ENCODE measurements at regions of chr1 and their contacts with region 1.

Region 1: DNA sequence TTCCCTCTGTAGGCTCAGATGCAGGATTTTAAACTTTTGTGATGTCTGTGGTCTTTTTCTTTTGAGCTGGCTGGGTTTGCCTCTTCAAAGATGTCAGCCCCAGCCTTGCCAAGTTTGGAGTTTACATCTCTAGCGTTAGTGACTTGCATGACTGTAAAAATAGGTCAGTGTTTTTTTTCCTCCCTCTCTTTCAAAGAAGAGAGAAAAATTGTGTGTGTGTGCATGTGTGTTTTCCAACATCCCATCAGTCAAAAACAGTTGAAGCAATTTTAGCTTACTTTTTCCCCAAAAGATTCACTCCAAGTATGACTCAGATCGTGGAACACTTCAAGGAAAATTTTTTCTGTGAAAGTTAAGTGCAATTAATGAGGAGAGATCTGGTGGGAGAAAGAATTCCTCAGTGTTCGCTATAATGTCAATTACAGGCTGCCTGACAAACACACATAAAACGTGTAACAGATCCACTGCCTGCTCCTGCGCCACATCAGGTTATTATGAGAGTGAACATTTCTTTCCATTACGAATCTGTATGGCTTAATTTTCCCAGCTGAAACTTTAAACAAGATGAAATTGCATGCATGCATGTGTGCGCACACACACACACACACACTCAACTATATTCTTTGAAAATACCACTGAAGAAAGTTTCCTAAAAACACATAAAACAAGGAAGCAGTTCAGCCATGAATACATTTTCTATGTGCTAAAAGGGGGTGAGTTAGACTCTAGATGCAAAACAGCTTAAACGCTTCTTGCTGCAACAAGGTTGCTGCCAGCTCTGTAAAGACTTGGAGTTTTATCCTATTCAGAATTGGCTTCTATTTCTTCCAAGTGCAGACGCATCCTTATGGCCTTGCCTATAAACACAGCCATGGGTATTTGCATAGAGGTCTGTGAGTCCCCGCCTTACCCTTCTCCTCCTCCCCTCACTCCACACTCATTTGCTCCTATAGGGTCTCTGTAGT is 55.5 kb downstream of the TLR5 start:
- DNase-seq: no peak
- H3K4me3 ChIP-seq: no peak overlapping the region
- H3K27ac ChIP-seq: no peak overlapping the region
- H3K27me3 ChIP-seq: peaks cover 35% of the 10 kb centered on the region
- CTCF ChIP-seq: no peak

Region 2: DNA sequence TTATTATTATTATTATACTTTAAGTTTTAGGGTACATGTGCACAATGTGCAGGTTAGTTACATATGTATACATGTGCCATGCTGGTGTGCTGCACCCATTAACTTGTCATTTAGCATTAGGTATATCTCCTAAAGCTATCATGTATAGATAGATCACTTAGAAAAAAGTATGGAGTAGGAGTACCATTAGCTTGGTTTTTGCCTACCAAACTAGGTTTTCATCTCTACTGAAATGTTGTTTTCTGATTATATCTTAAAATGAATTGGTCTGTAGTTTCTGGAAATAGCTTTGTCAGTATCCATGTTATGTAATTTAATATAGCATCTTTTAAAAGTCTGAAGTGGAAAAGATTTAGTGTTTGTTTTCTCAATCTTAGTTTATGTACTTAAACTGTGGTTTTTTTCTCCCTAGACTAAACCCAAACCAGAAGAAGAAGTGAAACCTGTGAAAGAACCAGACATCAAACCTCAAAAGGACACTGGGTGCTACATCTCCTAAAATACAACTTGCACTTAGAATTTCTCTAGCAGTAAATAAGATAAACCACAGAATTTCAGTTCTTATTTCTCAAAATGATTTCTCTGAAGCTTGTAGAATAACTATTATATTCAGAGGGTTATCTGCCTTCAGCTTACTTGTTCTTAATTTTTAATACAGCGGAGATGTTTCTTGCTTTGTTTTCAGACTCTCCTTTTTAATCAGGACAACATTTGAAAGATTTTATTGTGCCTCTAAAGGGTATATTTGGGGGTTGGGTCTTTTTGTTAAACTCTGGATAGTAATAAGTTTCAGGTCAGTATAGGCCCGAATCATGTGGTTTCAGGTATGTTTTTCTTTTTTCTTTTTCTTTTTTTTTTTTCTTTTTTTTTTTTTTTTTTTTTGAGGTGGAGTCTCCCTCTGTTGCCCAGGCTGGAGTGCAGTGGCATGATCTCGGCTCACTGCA is 355.1 kb before region 1 on chr1:
- CTCF ChIA-PET with region 1: interaction called, 27 read pairs
- POLR2A ChIA-PET with region 1: no interaction called
- DNase-seq: no peak
- H3K4me3 ChIP-seq: no peak overlapping the region
- H3K27ac ChIP-seq: no peak overlapping the region
- H3K27me3 ChIP-seq: no peaks in the 10 kb centered on the region
- CTCF ChIP-seq: no peak

Region 3: DNA sequence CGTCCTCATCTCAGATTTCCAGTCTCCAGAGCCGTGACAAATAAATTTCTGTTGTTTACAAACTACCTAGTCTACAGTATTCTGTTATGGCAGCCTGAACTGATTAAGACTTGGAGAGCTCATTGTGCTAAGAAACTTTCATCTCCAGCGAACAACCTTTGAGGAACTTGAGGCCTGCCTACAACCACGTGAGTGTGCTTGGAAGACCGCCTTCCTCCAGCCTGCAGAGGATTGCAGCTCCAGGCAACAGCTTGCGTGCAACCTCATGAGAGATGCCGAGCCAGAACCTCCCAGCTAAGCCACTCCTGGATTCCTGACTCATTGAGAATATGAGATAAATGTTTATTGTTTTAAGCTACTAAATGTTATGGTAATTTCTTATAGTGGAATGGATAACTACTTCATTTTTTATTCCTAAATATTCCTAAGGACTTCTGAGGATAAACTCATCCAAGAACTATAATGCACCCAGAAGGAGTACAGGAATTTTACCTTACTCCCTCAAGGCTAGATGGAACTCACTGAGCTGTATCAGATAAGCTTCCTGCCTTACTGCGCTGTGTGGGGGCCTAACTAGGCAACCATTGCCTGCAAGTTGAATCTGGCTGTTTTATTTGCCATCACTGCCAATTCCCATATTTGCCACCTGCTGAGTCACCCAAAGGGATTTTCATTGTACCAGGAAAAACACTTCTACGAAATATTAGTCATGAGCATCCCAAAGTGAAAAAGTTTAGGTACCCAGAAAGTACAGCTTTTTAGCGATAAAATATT is 333.0 kb before region 1 on chr1:
- CTCF ChIA-PET with region 1: interaction called, 13 read pairs
- POLR2A ChIA-PET with region 1: no interaction called
- DNase-seq: peak; percentile 92
- H3K4me3 ChIP-seq: no peak overlapping the region
- H3K27ac ChIP-seq: peak overlapping the region; percentile 49
- H3K27me3 ChIP-seq: no peaks in the 10 kb centered on the region
- CTCF ChIP-seq: no peak

Region 4: GRCh38 chr1:222798116-222798515 is 289.5 kb before region 1 on chr1:
- CTCF ChIA-PET with region 1: interaction called, 118 read pairs
- POLR2A ChIA-PET with region 1: no interaction called
- DNase-seq: no peak
- H3K4me3 ChIP-seq: no peak overlapping the region
- H3K27ac ChIP-seq: no peak overlapping the region
- H3K27me3 ChIP-seq: no peaks in the 10 kb centered on the region
- CTCF ChIP-seq: no peak

Region 5: GRCh38 chr1:223074445-223075300 is 12.9 kb before region 1 on chr1:
- CTCF ChIA-PET with region 1: interaction called, 15 read pairs
- POLR2A ChIA-PET with region 1: no interaction called
- DNase-seq: no peak
- H3K4me3 ChIP-seq: no peak overlapping the region
- H3K27ac ChIP-seq: no peak overlapping the region
- H3K27me3 ChIP-seq: peaks cover 34% of the 10 kb centered on the region
- CTCF ChIP-seq: no peak

Region 6: DNA sequence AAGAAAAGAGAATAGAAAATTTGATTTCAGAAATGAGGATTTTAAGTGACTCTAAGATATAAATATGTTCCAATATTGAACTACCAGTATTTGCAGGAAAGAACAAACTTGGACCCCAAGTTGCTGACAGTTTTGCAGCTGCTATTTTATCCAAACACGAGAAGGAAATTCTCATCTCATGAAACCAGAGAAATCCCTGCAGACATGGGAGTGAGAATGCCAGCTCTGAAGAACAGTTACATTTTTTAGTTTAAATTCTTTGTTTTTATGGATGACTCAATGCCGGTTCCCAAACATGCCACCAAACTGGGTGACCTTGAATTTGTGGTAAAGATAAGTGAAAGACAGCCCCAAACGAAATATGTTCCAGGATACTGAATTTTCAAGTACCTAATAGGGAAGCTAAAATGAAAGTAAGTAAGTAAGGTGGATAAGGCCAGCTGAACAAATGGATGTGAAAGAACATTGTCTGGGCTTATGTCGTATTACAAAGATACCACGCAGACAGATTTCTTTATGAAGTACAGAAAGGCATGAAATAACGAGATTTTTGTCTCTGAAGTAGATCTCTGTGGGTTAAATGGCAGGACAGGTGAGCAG is 35.5 kb after region 1 on chr1:
- CTCF ChIA-PET with region 1: interaction called, 36 read pairs
- POLR2A ChIA-PET with region 1: no interaction called
- DNase-seq: no peak
- H3K4me3 ChIP-seq: no peak overlapping the region
- H3K27ac ChIP-seq: no peak overlapping the region
- H3K27me3 ChIP-seq: peaks cover 11% of the 10 kb centered on the region
- CTCF ChIP-seq: no peak